ENCODE measurements at regions of chr1 and their contacts with region 1.

Region 1: GRCh38 chr1:205456868-205457745 is 1.3 kb upstream of the BLACAT1 start:
- DNase-seq: peak; percentile 47
- H3K4me3 ChIP-seq: peak overlapping the region; percentile 48
- H3K27ac ChIP-seq: no peak overlapping the region
- H3K4me1 ChIP-seq: peaks cover 16% of the 10 kb centered on the region
- H3K27me3 ChIP-seq: peaks cover 43% of the 10 kb centered on the region
- CTCF ChIP-seq: no peak

Region 2: DNA sequence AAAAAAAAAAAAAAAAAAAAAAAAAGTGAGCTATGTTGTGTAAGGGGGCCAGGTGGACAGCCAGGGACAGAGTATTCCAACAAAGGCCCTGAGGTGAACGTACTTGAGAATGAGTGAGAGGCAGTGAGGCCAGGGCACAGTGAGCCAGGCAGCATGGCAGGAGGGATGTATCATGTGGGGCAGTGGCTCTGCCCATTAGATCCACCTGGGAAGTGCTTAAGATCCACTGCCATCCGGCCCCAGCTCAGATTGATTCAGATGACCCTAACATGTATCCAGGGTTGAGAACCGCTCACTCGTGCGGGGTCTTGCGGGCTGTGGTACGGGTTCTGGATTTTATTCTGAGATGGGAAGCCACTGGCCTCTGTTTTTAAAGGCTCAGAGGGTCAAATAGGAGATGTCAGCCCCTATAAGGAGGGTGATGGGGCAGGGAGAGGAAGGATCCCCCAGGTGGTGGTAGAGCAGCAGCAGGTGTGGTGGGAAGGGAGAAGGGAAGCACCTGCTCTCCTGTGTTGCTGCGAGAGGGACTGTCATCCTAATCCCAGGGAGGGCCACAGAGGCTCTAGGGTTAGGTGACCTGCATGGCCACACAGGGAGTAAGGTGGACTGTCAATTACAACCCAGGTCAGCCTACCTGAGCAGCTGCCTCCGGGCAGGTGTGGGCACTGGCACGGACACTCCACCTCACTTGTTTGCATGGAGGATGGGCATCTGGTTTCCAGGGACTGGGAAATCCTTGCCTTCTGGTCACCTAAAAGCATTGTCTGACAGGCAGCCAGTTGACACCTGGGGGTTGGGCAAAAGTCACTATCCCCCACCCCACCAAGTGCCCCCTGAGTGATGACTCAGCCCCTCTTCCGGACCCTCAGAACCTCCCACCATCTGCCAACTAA is 79.0 kb after region 1 on chr1:
- CTCF ChIA-PET with region 1: interaction called, 11 read pairs
- POLR2A ChIA-PET with region 1: no interaction called
- intact Hi-C with region 1: no loop called
- DNase-seq: no peak
- H3K4me3 ChIP-seq: no peak overlapping the region
- H3K27ac ChIP-seq: no peak overlapping the region
- H3K4me1 ChIP-seq: no peaks in the 10 kb centered on the region
- H3K27me3 ChIP-seq: peaks cover 4% of the 10 kb centered on the region
- CTCF ChIP-seq: no peak

Region 3: GRCh38 chr1:205766038-205766437 is 308.9 kb after region 1 on chr1:
- CTCF ChIA-PET with region 1: no interaction called
- POLR2A ChIA-PET with region 1: no interaction called
- intact Hi-C with region 1: no loop called
- DNase-seq: no peak
- H3K4me3 ChIP-seq: no peak overlapping the region
- H3K27ac ChIP-seq: no peak overlapping the region
- H3K4me1 ChIP-seq: no peaks in the 10 kb centered on the region
- H3K27me3 ChIP-seq: no peaks in the 10 kb centered on the region
- CTCF ChIP-seq: no peak

Region 4: GRCh38 chr1:206041640-206042039 is 584.5 kb after region 1 on chr1:
- CTCF ChIA-PET with region 1: no interaction called
- POLR2A ChIA-PET with region 1: interaction called, 30 read pairs
- intact Hi-C with region 1: no loop called
- DNase-seq: no peak
- H3K4me3 ChIP-seq: no peak overlapping the region
- H3K27ac ChIP-seq: no peak overlapping the region
- H3K4me1 ChIP-seq: no peaks in the 10 kb centered on the region
- H3K27me3 ChIP-seq: no peaks in the 10 kb centered on the region
- CTCF ChIP-seq: no peak